ENCODE measurements at regions of chr3 and their contacts with region 1.

Region 1: DNA sequence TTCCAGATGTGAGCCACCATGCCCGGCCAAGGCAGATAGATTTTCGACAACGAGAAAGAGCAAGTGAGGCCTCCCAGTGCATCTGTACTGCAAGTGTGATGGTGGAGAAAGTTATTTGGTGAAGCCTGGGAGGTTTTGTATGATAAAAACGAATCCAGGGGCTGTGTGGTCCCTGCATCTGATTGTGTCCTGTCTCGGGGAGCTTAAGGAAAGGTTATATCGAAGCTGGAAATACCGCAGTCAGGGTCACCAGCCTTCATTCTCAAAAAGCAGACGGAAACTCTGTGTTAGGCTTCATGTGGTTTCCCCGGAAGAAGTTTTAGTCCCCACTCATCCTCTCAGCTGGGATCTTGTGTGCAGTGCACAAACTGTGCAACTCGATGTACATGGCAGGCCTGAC is 3.4 kb downstream of the MINDY4B start:
- DNase-seq: no peak
- H3K4me3 Mint-ChIP-seq: no peak overlapping the region
- H3K27ac Mint-ChIP-seq: no peak overlapping the region
- H3K4me1 Mint-ChIP-seq: no peaks in the 10 kb centered on the region
- H3K27me3 Mint-ChIP-seq: peaks cover 6% of the 10 kb centered on the region

Region 2: GRCh38 chr3:150917951-150918350 is 16.2 kb after region 1 on chr3:
- CTCF ChIA-PET with region 1: no interaction called
- intact Hi-C with region 1: no loop called
- DNase-seq: no peak
- H3K4me3 Mint-ChIP-seq: no peak overlapping the region
- H3K27ac Mint-ChIP-seq: no peak overlapping the region
- H3K4me1 Mint-ChIP-seq: no peaks in the 10 kb centered on the region
- H3K27me3 Mint-ChIP-seq: peaks cover 4% of the 10 kb centered on the region

Region 3: DNA sequence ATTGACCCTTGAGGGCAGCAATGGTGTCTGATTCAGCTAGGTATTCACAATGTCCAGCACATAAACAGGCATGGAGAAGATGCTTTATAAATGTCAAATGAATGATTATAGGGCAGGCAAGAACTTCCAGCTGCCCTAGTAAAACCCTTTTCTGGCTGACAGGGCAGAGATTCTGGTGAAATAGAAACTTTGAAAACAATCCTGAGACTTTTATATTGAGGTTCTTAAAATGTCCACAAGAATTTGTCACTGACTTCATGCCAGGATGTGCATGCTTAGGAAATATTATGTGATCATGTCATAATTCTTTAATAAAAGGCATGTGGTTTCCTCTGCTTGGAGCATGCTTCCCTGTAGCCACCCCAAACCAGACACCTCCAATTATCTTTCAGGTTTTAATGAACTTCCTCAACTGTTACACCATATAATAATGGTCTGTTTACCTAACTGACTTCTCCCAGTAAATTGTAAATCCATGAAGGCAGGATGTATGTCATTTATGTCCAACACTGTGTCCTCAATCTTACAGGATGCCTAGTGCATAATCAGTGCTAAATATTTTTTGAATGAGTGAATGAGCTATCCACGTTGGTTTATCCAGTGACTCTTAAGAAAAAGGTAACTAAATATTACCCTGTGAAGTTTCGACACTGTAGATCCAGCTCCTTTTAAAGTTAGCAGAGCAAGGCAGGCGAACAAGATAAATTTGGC is 114.1 kb after region 1 on chr3:
- CTCF ChIA-PET with region 1: no interaction called
- intact Hi-C with region 1: loop called (anchors 1 kb)
- DNase-seq: no peak
- H3K4me3 Mint-ChIP-seq: no peak overlapping the region
- H3K27ac Mint-ChIP-seq: no peak overlapping the region
- H3K4me1 Mint-ChIP-seq: no peaks in the 10 kb centered on the region
- H3K27me3 Mint-ChIP-seq: peaks cover 3% of the 10 kb centered on the region

Measured in activated naive CD4-positive, alpha-beta T cell treated with anti-CD3 and anti-CD28 coated beads for 36 hours (primary cell).